RWPE1 (cell line): ENCODE measurements at regions of chr5 and their contacts with region 1.

Region 1: DNA sequence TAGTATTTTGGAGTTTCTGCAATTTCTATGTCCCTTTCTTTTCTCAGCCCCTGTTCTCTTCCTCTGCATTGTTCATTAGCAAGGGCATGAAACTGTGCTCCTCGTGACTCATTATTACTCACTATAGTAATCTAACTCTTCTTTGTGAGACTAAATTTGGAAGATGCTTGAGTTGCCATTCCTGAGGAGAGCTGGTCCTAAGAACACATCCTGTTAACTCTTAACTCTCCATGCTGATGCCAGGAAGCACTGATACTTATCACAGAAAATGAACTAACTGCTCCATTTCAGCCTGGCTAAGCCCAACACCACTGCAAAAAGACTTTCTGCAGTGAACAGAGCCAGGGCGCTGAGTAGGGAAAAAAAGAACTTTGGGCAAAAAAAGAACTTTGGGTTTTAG is 10.6 kb upstream of the CSNK1A1 start:
- DNase-seq: peak; percentile 92
- H3K27ac ChIP-seq: peak overlapping the region; percentile 99
- CTCF ChIP-seq: no peak

Region 2: DNA sequence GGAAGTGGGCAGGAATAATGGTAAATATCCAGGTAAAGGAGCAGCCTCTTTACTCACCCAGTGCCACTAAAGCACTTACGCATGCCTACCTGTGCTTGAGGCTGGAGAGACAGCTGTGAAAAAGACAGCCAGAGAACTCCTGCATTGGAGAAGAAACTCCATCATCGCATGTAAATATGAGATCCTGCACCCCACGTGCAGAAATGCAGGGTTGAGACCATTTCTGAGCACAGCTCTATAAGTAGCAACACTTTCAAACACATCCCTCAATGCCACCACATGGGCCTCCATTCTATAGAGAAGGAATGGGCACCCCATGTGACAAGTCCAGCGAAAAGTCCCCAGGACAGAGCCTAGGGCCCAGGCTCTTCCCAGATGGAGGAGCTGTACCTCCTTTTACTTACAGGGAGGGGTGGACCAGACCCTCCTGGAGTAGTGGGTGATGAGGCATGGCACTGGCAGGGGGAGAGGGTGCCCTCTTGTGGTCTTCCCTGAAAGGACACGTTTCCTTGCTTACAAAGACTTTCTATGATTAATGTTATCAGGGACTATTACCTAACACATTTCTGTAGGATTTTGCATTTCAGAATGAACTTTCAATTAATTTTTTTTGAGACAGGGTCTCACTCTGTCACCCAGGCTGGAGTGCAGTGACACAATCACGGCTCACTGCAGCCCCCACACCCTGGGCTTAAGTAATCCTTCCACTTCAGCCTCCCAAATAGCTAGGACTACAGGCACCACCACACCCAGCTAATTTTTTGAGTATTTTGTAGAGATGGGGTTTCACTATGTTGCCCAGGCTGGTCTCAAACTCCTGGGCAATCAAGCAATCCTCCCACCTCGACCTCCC is 127.5 kb before region 1 on chr5:
- CTCF ChIA-PET with region 1: interaction called, 4 read pairs
- POLR2A ChIA-PET with region 1: interaction called, 16 read pairs
- DNase-seq: peak; percentile 86
- H3K27ac ChIP-seq: peak overlapping the region; percentile 23
- CTCF ChIP-seq: peak; percentile 94

Region 3: GRCh38 chr5:149551200-149552037 is 10.4 kb before region 1 on chr5 and contains the start of gene CSNK1A1:
- CTCF ChIA-PET with region 1: interaction called, 10 read pairs
- POLR2A ChIA-PET with region 1: interaction called, 6 read pairs
- DNase-seq: peak; percentile 100
- H3K27ac ChIP-seq: peak within 1 kb of the TSS; percentile 95
- CTCF ChIP-seq: peak; percentile 96